ENCODE measurements at regions of chr6 and their contacts with region 1.

Region 1: DNA sequence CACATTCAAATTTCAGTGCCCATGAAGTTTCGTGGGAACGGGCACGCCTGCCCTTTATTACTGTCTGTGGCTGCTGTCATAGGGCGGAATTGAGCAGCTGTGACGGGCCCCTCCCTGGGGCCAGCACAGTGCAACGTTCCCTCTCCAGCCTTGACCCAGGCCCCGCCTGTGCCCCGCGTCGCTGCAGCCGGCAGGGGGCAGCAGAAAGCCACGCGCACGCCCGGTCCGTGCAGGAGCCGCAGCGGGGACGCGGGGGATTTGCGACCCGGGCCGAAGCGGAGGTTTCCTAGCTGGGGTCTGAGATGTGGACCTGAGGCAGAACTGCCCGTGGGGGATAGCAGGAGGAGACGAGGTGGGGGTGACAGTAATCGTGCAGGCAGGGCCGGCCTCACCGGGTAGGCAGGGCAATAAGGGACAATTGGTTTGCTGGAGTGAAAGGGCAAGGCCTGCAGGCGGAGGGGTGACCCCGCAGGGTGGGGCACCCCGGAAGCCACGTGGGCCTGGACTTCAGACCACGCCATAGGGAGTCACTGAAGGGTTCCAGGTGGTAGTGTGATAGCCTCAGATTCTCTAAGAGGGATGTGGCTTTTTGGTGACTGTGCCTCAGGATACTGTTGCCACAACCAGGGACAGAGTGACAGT is 54.4 kb downstream of the SYTL3 start:
- DNase-seq: peak; percentile 66 to 89 (median 77)
- ATAC-seq: peak; percentile 97
- H3K4me3 ChIP-seq: peak overlapping the region; percentile 45 to 60
- H3K4me3 Mint-ChIP-seq: peak overlapping the region; percentile 81
- H3K27ac ChIP-seq: peak overlapping the region in 1 of 2 experiments; percentile 17
- H3K27ac Mint-ChIP-seq: peak overlapping the region; percentile 79
- H3K4me1 ChIP-seq: peaks cover 8% of the 10 kb centered on the region
- H3K4me1 Mint-ChIP-seq: peaks cover 9% of the 10 kb centered on the region
- H3K27me3 ChIP-seq: no peaks in the 10 kb centered on the region
- H3K27me3 Mint-ChIP-seq: no peaks in the 10 kb centered on the region
- CTCF ChIP-seq: peak; percentile 98

Region 2: GRCh38 chr6:158595223-158595622 is 109.1 kb before region 1 on chr6:
- CTCF ChIA-PET with region 1: no interaction called
- POLR2A ChIA-PET with region 1: no interaction called
- intact Hi-C with region 1: no loop called
- DNase-seq: peak in 4 of 9 experiments; percentile 17 to 50 (median 33)
- ATAC-seq: peak; percentile 67
- H3K4me3 ChIP-seq: no peak overlapping the region
- H3K4me3 Mint-ChIP-seq: no peak overlapping the region
- H3K27ac ChIP-seq: no peak overlapping the region
- H3K27ac Mint-ChIP-seq: no peak overlapping the region
- H3K4me1 ChIP-seq: no peaks in the 10 kb centered on the region
- H3K4me1 Mint-ChIP-seq: peaks cover 4% of the 10 kb centered on the region
- H3K27me3 ChIP-seq: no peaks in the 10 kb centered on the region
- H3K27me3 Mint-ChIP-seq: no peaks in the 10 kb centered on the region
- CTCF ChIP-seq: no peak

Region 3: DNA sequence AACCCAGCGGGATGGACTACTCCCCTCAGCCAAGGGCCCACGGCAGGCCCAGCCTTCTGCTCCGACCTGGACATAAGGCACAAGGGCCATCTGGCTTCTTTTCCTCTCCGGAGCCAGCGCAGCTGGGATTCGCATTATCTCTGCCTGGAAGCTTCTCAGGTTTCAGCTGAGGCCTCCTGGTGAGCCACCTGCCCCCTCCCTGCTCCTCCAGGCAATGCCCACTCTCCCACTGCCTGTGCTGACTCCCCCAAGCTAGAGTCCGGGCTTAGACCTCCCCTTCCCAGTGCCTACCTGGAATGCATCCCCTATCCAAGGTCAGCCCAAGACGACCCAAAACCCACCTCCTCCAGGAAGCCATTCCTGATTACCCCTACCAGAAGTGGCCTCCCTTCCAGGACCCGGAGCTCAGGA is 54.2 kb after region 1 on chr6:
- CTCF ChIA-PET with region 1: interaction called, 5 read pairs
- POLR2A ChIA-PET with region 1: no interaction called
- intact Hi-C with region 1: loop called in 1 of 2 experiments (anchors 5 kb)
- DNase-seq: no peak
- ATAC-seq: no peak
- H3K4me3 ChIP-seq: no peak overlapping the region
- H3K4me3 Mint-ChIP-seq: no peak overlapping the region
- H3K27ac ChIP-seq: no peak overlapping the region
- H3K27ac Mint-ChIP-seq: no peak overlapping the region
- H3K4me1 ChIP-seq: no peaks in the 10 kb centered on the region
- H3K4me1 Mint-ChIP-seq: no peaks in the 10 kb centered on the region
- H3K27me3 ChIP-seq: no peaks in the 10 kb centered on the region
- H3K27me3 Mint-ChIP-seq: no peaks in the 10 kb centered on the region
- CTCF ChIP-seq: no peak

Region 4: GRCh38 chr6:158938811-158939254 is 234.5 kb after region 1 on chr6:
- CTCF ChIA-PET with region 1: no interaction called
- POLR2A ChIA-PET with region 1: no interaction called
- intact Hi-C with region 1: no loop called
- DNase-seq: peak in 4 of 9 experiments; percentile 12 to 34 (median 22)
- ATAC-seq: peak; percentile 66
- H3K4me3 ChIP-seq: peak overlapping the region; percentile 15 to 17
- H3K4me3 Mint-ChIP-seq: peak overlapping the region; percentile 81
- H3K27ac ChIP-seq: no peak overlapping the region
- H3K27ac Mint-ChIP-seq: no peak overlapping the region
- H3K4me1 ChIP-seq: no peaks in the 10 kb centered on the region
- H3K4me1 Mint-ChIP-seq: peaks cover 15% of the 10 kb centered on the region
- H3K27me3 ChIP-seq: no peaks in the 10 kb centered on the region
- H3K27me3 Mint-ChIP-seq: peaks cover 4% of the 10 kb centered on the region
- CTCF ChIP-seq: no peak

Region 5: DNA sequence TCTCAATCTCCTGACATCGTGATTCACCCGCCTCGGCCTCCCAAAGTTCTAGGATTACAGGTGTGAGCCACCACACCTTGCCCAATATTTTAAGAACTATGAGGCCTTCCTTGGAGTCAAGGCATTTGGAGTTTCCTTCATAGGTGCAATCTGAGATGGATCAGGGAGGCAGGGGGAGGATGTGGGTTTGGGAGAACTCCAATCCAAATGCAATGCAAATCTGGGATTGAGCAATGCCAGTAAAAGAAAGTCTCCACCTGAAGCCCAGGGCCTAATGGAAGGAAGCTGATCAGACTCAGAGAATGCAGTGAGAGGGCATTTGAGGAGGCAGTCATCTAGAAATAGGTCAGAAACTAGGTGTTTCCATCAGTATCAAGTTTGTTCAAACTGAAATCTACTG is 274.5 kb after region 1 on chr6:
- CTCF ChIA-PET with region 1: interaction called, 140 read pairs
- POLR2A ChIA-PET with region 1: interaction called, 4 read pairs
- intact Hi-C with region 1: no loop called
- DNase-seq: no peak
- ATAC-seq: no peak
- H3K4me3 ChIP-seq: no peak overlapping the region
- H3K4me3 Mint-ChIP-seq: no peak overlapping the region
- H3K27ac ChIP-seq: no peak overlapping the region
- H3K27ac Mint-ChIP-seq: no peak overlapping the region
- H3K4me1 ChIP-seq: no peaks in the 10 kb centered on the region
- H3K4me1 Mint-ChIP-seq: no peaks in the 10 kb centered on the region
- H3K27me3 ChIP-seq: no peaks in the 10 kb centered on the region
- H3K27me3 Mint-ChIP-seq: no peaks in the 10 kb centered on the region
- CTCF ChIP-seq: no peak